Natural killer cell (primary cell): ENCODE measurements at regions of chr17 and their contacts with region 1.

Region 1: DNA sequence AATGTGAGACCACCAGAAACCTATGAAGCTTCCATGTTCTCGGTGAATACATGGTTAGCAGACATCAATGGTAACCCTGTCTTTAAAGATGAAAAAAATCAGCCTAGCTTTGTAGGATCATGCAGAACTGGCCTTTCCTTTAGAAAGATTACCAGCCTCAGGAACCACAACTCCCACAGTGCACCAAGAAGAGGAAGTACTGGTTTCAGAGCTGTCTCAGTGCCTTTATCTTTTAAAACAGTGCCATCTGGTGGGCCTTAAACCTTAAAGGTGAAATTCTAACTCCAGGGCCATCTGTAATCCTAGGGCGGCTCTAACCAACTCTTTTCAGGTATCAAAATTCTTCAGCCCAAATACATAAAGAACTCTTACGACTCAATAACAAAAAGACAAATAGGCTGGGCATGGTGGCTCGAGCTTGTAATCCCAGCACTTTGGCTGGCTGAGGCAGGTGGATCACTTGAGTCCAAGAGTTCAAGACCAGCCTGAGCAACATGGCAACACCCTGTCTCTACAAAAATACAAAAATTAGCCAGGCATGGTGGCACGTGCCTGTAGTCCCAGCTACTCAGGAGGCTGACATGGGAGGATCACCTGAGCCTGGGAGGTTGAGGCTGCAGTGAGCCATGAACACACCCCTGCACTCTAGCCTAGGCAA is 5.4 kb downstream of the ATPAF2 start:
- DNase-seq: peak; percentile 28 to 87
- ATAC-seq: peak; percentile 90 to 97 (median 95)
- H3K4me3 ChIP-seq: no peak overlapping the region
- H3K4me3 Mint-ChIP-seq: no peak overlapping the region
- H3K27ac ChIP-seq: no peak overlapping the region
- H3K27ac Mint-ChIP-seq: peak overlapping the region in 1 of 2 donors; percentile 58
- H3K4me1 ChIP-seq: peaks cover 17% of the 10 kb centered on the region
- H3K4me1 Mint-ChIP-seq: peaks cover 21 to 30% of the 10 kb centered on the region in 2 donors
- H3K27me3 ChIP-seq: no peaks in the 10 kb centered on the region
- H3K27me3 Mint-ChIP-seq: no peaks in the 10 kb centered on the region
- CTCF ChIP-seq: peak; percentile 64

Region 2: DNA sequence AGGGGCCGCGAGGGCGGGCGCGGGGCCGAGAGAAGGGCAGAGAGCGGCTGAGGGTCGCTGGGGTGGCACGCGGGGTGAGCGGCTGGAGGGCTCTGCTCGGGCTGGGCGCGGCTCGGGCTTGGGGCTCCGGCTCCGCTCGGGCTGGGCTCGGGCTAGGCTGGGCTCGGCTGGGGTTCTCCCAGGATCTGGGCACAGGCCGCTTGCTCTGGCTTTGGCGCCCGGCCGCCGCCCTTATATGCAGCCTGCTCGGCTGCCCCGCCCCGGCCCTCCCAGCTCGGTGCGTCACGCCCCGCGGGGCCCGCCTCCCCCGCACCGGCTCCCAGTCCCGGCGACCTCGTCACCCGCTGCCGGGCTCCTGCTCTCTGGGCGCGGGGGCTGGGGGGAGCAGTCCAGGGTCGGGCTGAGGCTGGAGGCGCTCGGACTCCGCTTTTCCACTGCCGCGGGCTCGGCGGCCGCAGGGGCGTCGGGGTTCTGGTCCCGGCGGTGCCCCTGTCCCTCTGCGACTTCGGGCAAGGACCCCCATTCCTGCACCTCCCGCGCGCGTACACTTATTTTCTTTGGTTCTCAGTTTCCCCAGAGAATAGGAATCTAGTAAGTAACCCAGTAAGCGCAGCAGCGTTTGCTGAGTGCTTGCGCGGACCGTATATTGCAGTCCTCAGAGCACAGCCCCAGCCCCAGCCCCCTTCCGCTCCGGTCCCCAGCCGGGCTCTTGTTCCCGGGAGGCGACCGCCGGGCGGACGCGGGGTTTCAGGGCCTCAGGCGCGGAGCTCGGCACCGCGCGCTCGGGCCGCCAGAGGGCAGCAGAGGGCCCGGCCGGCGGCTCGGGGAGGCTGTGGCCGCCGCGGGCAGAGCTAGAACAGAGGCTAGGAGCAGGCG is 537.1 kb before region 1 on chr17 and contains the start of gene RASD1:
- intact Hi-C with region 1: loop called (anchors 1 kb)
- DNase-seq: peak; percentile 79 to 88
- ATAC-seq: peak; percentile 87 to 92 (median 88)
- H3K4me3 ChIP-seq: peak within 1 kb of the TSS; percentile 50
- H3K4me3 Mint-ChIP-seq: peak within 1 kb of the TSS; percentile 92
- H3K27ac ChIP-seq: peak within 1 kb of the TSS; percentile 3
- H3K27ac Mint-ChIP-seq: peak within 1 kb of the TSS in 1 of 2 donors; percentile 48
- H3K4me1 ChIP-seq: peaks cover 19% of the 10 kb centered on the region
- H3K4me1 Mint-ChIP-seq: peaks cover 6 to 16% of the 10 kb centered on the region in 2 donors
- H3K27me3 ChIP-seq: peaks cover 6% of the 10 kb centered on the region
- H3K27me3 Mint-ChIP-seq: peaks cover 5 to 8% of the 10 kb centered on the region in 2 donors
- CTCF ChIP-seq: peak; percentile 99
- total RNA-seq, gene RASD1: 0.60 to 2.4 (median 1.2) TPM

Region 3: DNA sequence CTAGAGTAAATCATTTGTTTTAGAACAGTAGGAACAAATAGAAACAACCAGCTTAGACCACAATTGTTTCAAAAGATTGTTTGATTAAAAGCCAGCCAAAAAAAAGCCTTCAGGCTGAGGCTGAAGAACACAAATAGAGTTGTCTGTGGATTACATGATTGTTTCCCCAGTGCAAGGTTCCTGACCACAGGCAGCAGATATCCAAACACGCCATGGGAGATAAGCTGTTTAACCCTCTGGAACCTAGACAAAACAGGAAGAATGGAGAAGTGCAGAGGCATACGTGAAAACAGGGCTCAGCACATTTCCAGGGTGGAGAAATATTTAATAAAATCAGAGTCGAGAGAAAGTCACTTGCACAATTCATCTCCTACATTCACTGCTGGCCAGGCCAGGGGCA is 15.6 kb before region 1 on chr17:
- intact Hi-C with region 1: no loop called
- DNase-seq: no peak
- ATAC-seq: no peak
- H3K4me3 ChIP-seq: no peak overlapping the region
- H3K4me3 Mint-ChIP-seq: no peak overlapping the region
- H3K27ac ChIP-seq: no peak overlapping the region
- H3K27ac Mint-ChIP-seq: no peak overlapping the region
- H3K4me1 ChIP-seq: no peaks in the 10 kb centered on the region
- H3K4me1 Mint-ChIP-seq: no peaks in the 10 kb centered on the region
- H3K27me3 ChIP-seq: no peaks in the 10 kb centered on the region
- H3K27me3 Mint-ChIP-seq: no peaks in the 10 kb centered on the region
- CTCF ChIP-seq: no peak